ENCODE measurements at regions of chr5 and their contacts with region 1.

Region 1: GRCh38 chr5:64827703-64828102 is 59.0 kb downstream of the CWC27 start:
- DNase-seq: no peak
- ATAC-seq: no peak
- H3K4me3 ChIP-seq: no peak overlapping the region
- H3K27ac ChIP-seq: no peak overlapping the region
- H3K4me1 ChIP-seq: no peaks in the 10 kb centered on the region
- H3K27me3 ChIP-seq: no peaks in the 10 kb centered on the region
- CTCF ChIP-seq: no peak
- POLR2A ChIP-seq: no peak
- RAD21 ChIP-seq: no peak

Region 2: GRCh38 chr5:65276178-65276890 is 448.6 kb after region 1 on chr5:
- CTCF ChIA-PET with region 1: no interaction called
- POLR2A ChIA-PET with region 1: no interaction called
- RAD21 ChIA-PET with region 1: no interaction called
- intact Hi-C with region 1: no loop called
- DNase-seq: no peak
- ATAC-seq: no peak
- H3K4me3 ChIP-seq: no peak overlapping the region
- H3K27ac ChIP-seq: no peak overlapping the region
- H3K4me1 ChIP-seq: no peaks in the 10 kb centered on the region
- H3K27me3 ChIP-seq: no peaks in the 10 kb centered on the region
- CTCF ChIP-seq: no peak
- POLR2A ChIP-seq: no peak
- RAD21 ChIP-seq: no peak

Region 3: DNA sequence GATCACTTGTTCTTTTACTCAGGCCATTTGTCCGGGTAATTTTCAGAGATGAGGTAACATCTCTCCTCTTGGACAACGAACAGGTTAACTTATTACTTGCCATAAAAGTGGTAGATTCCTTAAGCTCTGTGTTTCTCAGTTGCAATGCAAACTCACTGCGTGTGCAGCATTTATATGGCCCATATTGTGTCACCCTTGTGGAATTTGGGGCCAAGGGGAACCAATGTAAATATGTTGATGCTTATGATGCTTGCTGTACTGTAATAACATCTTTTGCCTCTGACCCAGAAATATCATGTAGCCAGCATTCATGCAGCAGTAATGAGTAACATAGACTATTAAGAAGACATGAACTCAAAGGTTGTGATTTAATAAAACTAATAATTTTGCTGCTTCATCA is 478.2 kb after region 1 on chr5:
- CTCF ChIA-PET with region 1: no interaction called
- POLR2A ChIA-PET with region 1: no interaction called
- RAD21 ChIA-PET with region 1: no interaction called
- intact Hi-C with region 1: loop called (anchors 10 kb)
- DNase-seq: no peak
- ATAC-seq: no peak
- H3K4me3 ChIP-seq: no peak overlapping the region
- H3K27ac ChIP-seq: no peak overlapping the region
- H3K4me1 ChIP-seq: no peaks in the 10 kb centered on the region
- H3K27me3 ChIP-seq: no peaks in the 10 kb centered on the region
- CTCF ChIP-seq: no peak
- POLR2A ChIP-seq: no peak
- RAD21 ChIP-seq: no peak

Measured in HCT116 (cell line).